Activated CD8-positive, alpha-beta T cell treated with anti-CD3 and anti-CD28 coated beads for 36 hours (primary cell): ENCODE measurements at regions of chr12 and their contacts with region 1.

Region 1: DNA sequence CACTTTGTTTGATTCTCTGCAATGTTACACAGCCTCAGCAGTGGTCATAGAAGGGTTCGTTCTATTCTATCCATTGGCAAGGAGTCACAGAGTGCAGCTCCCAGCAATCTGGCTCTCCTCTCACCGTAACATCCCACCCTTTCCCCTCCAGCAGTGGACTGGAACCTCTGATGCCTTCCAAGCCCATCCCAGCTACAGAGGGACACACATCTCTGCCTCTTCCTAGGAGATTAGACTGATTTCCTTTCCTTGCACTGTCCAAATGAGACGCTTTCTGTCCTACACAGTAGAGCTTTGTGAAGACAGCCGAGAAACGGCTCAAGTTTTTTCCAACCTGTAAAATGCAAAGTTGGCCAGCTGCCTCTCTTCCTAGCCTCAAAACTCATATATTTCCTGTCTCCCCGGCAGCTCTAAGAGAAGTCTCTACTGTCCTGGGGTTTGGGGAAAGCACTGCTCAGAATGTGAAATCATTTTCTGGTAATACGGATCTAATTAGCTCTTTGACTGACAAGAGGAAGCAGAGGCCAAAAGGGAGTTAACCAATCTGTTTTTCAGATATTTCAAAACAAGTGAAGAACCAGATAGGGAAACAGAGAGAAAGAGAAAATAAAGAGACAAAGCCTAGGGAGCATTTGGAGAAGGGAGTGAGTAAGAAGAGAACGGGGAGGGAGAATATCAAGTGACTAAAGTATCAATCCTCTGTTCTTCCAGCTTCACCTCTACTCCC is 516 bp downstream of the NINJ2 start:
- DNase-seq: no peak
- ATAC-seq: no peak
- H3K4me3 Mint-ChIP-seq: peak overlapping the region; percentile 59
- H3K27ac Mint-ChIP-seq: peak overlapping the region; percentile 79
- H3K4me1 Mint-ChIP-seq: peaks cover 50% of the 10 kb centered on the region
- H3K27me3 Mint-ChIP-seq: no peaks in the 10 kb centered on the region
- CTCF ChIP-seq: no peak

Region 2: DNA sequence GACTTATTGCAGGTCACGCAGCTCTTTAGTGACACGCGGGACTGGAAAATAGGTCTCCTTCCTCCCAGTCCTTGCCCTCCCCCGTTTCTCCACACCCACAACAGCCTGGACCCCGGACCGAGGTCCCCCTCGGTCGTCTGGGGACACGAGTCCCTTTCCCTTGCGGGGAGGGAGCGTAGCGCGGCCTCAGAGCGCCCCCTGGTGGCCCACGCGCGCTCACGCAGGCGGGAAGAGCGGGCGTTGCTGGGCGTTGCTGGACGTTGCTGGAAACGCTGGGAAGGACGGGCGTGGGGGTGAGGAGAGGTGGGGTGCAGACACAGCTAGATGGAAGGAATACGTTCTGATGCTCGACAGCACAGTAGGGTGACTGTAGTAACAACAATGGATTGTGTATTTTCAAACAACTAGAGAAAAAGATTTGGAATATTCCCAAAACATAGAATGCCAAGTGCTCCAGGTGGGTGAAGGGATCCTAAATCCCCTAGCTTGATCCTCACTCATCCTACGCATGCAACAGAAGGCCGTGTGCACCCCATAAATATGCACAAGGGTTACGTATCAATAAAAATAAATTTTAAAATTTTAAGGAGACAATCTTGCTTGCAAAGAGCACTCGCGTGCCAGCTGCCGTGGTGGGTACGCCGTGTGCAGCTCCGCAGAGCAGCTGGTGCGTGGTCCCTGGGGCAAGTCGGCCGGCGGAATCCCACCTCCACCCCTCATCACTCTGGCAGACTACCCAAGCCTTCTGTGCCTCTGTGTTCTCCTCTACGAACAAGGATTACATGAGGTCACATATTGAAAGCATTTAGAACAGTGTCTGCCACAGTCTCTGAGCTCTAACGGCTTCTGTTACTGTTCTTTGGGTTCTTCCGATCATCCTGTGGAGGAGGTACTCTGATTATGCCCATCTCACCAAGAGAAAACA is 115.5 kb before region 1 on chr12:
- CTCF ChIA-PET with region 1: no interaction called
- POLR2A ChIA-PET with region 1: no interaction called
- intact Hi-C with region 1: no loop called
- DNase-seq: peak; percentile 66
- ATAC-seq: peak; percentile 86
- H3K4me3 Mint-ChIP-seq: no peak overlapping the region
- H3K27ac Mint-ChIP-seq: no peak overlapping the region
- H3K4me1 Mint-ChIP-seq: peaks cover 19% of the 10 kb centered on the region
- H3K27me3 Mint-ChIP-seq: peaks cover 8% of the 10 kb centered on the region
- CTCF ChIP-seq: peak; percentile 97

Region 3: DNA sequence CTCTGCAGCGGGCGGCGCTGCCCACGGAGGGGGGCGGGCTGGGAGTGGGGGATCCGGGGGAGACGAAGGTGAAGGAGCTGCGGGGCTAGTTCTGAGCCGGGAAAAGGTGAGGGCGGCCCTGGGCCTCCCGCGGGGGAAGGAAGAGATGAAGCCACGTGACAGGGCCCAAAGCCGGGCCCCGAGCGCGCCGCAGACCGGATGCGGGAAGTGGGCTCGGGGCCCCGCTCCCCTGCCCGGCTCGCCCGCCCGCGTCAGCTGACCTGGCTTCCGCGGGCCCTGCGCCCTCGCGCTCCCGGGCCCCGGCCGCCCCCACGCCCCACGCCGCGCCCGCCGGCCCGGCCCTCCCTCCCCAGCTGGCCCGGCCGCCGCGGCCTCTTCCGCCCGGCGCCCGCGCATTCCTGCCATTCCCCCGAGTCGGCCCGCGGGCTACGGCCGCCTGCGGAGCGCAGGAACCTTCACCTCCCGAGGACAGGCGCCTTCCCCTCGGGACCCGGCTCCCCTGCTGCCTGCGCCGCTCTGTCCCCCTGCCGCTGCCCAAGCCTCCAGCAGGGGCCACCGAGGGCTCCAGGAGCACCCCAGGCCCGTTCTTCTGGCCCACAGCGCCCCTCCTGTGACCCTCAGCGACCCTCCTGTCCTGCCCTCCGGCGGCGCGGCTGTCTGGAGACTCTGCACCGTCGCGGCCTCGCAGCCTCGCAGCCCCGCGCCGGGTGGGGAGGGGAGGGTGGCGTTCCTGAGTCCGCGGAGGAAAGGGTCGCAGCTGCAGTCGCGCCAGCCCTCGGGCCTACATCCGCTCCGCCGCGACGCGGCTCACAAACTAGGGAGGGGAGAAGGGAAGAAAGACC is 19.9 kb before region 1 on chr12:
- CTCF ChIA-PET with region 1: interaction called, 4 read pairs
- POLR2A ChIA-PET with region 1: interaction called, 24 read pairs
- intact Hi-C with region 1: no loop called
- DNase-seq: peak; percentile 82
- ATAC-seq: peak; percentile 68
- H3K4me3 Mint-ChIP-seq: peak overlapping the region; percentile 84
- H3K27ac Mint-ChIP-seq: peak overlapping the region; percentile 91
- H3K4me1 Mint-ChIP-seq: peaks cover 57% of the 10 kb centered on the region
- H3K27me3 Mint-ChIP-seq: no peaks in the 10 kb centered on the region
- CTCF ChIP-seq: peak; percentile 48